ENCODE measurements at regions of chr12 and their contacts with region 1.

Region 1: DNA sequence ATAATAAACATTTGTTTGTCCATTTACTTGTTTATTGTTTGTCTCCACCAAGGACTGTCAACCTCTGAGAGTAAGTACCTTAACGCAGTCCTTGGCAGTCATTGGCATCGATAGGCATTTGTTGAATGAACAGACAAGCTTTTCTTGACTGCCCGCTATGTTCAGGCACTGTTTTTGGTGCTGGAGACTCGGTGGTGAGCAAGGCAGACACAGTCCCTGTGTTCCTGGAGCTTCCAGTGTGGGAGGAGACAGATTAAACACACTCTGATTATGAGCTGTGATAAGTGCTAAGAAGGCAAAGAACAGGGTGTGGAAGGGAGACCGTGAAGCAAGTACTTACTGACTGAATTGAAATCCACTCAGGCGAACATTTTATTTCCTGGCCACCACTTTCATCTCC is 1.2 kb downstream of the ATP6V0A2 start:
- DNase-seq: no peak
- ATAC-seq: no peak
- H3K4me3 Mint-ChIP-seq: peak overlapping the region; percentile 93
- H3K27ac Mint-ChIP-seq: peak overlapping the region; percentile 84
- H3K4me1 Mint-ChIP-seq: peaks cover 30% of the 10 kb centered on the region
- H3K27me3 Mint-ChIP-seq: no peaks in the 10 kb centered on the region

Region 2: GRCh38 chr12:123546281-123546680 is 167.1 kb before region 1 on chr12:
- POLR2A ChIA-PET with region 1: no interaction called
- DNase-seq: no peak
- ATAC-seq: no peak
- H3K4me3 Mint-ChIP-seq: no peak overlapping the region
- H3K27ac Mint-ChIP-seq: no peak overlapping the region
- H3K4me1 Mint-ChIP-seq: no peaks in the 10 kb centered on the region
- H3K27me3 Mint-ChIP-seq: peaks cover 14% of the 10 kb centered on the region

Region 3: DNA sequence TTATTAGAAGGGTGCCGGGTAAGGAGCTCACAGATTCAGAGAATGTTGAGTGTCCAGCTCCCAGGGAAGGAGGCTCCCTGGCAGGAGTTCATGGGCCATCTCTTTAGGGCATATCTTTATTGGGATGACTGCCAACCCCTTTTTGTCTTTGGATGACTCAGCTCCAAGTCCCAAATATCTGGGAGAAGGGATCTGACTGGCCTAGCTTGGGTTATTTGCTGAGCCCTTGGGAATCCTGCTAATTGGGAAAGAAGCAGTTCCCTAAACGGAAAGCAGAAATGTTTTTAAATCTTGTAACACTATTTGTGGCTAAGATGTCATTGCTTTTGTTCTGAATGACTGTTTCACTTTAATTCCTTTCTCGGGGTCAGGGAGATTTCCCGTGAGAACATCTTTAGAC is 98.9 kb before region 1 on chr12:
- POLR2A ChIA-PET with region 1: no interaction called
- DNase-seq: no peak
- ATAC-seq: no peak
- H3K4me3 Mint-ChIP-seq: no peak overlapping the region
- H3K27ac Mint-ChIP-seq: no peak overlapping the region
- H3K4me1 Mint-ChIP-seq: peaks cover 5% of the 10 kb centered on the region
- H3K27me3 Mint-ChIP-seq: no peaks in the 10 kb centered on the region

Region 4: DNA sequence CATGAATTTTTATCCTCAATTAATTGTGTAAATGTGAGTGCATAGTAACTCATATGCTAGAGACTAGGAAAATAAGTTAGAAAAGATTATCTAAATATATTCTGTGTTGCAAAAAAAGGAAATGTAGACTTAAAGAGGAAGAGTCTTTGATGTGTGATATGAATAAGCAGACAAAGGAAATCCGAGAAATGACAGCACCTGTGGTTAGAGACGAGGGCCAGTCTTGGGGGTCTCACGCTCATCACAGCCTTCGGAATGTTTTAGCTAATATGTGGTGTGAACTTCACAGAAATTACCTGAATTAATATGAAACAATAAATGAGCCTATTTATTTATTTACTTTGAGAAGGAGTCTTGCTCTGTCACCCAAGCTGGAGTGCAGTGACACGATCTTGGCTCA is 10.4 kb after region 1 on chr12:
- POLR2A ChIA-PET with region 1: interaction called, 29 read pairs
- DNase-seq: no peak
- ATAC-seq: peak; percentile 66
- H3K4me3 Mint-ChIP-seq: peak overlapping the region; percentile 48
- H3K27ac Mint-ChIP-seq: peak overlapping the region; percentile 67
- H3K4me1 Mint-ChIP-seq: peaks cover 15% of the 10 kb centered on the region
- H3K27me3 Mint-ChIP-seq: no peaks in the 10 kb centered on the region